GM18951 (cell line): ENCODE measurements at regions of chr5 and their contacts with region 1.

Region 1: GRCh38 chr5:156655732-156656131 is 194.4 kb upstream of the PPP1R2B start:
- POLR2A ChIP-seq: no peak

Region 2: GRCh38 chr5:156475182-156476157 is 180.3 kb before region 1 on chr5:
- in situ Hi-C with region 1: no loop called
- POLR2A ChIP-seq: no peak

Region 3: GRCh38 chr5:156800929-156801328 is 145.2 kb after region 1 on chr5:
- in situ Hi-C with region 1: no loop called
- POLR2A ChIP-seq: no peak

Region 4: DNA sequence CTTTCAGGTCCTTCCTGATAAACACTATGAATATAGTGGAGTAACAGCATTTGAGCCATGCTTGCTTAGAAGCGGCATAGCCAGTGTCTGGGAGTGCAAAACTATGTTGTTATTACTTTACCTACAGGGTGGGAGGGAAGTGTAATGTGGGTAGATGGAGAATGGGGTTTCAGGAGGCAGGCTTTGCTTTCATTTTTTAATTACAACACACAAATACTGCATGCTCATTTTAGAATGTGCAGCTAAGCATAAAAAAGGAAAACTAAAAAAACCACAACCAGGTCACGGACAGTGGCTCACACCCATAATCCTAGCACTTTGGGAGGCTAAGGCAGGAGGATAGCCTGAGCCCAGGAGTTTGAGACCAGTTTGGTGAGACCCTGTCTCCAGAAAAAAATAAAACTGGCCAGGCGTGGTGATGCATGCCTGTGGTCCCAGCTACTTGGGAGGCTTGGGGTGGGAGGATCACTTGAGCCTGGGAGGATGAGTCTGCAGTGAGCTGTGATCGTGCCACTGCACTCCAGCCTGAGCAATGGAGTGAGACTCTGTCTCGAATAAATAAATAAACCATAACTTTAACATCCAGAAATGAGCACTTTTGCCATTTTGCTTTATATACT is 382.9 kb after region 1 on chr5:
- in situ Hi-C with region 1: no loop called
- POLR2A ChIP-seq: no peak

Region 5: DNA sequence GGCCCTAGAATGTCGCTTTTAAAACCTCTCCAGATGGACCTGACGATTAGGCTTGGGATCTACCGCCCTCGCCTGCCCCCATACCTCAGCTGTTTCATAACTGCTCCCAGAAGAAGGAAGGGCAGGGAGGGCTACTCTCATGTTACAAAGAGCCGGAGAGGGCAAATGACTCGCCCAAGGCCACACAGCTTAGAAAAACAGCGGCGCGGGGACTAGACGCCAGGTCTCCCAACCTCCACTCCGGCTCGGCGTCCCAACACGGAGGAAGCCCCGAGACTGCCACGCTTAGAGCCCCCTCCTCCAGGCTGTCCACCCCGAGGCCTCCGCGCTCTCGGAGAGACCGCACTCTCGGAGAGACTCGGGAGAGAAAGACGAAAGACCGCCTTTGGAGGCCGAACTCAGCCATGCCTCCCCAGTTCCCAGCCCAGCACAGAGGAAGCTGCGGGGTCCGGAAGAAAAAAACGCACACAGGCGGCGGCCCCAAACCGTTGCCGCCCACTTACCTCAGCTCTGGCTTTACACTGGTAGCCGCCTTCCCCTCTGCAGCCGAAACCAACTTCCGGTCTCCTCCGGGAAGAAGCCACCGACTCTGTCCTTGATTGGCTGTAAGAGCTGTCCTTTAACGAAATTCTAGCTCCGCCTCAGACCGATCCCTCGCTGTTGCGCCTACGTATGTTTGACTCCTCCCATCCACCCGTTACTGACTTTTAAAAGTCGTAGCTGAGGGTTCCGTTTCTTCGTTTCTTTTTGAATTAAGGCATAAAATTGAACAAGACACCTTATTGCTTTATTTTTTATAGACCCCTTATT is 486.8 kb after region 1 on chr5 and contains the start of gene MED7:
- in situ Hi-C with region 1: loop called (anchors 25 kb)
- POLR2A ChIP-seq: peak; percentile 90